ENCODE measurements at regions of chr15 and their contacts with region 1.

Region 1: GRCh38 chr15:33292717-33293307 is 18.0 kb upstream of the RYR3 start:
- DNase-seq: no peak
- H3K4me3 ChIP-seq: no peak overlapping the region
- H3K27ac ChIP-seq: no peak overlapping the region
- H3K4me1 ChIP-seq: no peaks in the 10 kb centered on the region
- H3K27me3 ChIP-seq: peaks cover 0 to 15% (median 0%) of the 10 kb centered on the region in 7 donors
- CTCF ChIP-seq: peak in 9 of 11 experiments; percentile 34 to 62 (median 49)
- POLR2A ChIP-seq: no peak

Region 2: DNA sequence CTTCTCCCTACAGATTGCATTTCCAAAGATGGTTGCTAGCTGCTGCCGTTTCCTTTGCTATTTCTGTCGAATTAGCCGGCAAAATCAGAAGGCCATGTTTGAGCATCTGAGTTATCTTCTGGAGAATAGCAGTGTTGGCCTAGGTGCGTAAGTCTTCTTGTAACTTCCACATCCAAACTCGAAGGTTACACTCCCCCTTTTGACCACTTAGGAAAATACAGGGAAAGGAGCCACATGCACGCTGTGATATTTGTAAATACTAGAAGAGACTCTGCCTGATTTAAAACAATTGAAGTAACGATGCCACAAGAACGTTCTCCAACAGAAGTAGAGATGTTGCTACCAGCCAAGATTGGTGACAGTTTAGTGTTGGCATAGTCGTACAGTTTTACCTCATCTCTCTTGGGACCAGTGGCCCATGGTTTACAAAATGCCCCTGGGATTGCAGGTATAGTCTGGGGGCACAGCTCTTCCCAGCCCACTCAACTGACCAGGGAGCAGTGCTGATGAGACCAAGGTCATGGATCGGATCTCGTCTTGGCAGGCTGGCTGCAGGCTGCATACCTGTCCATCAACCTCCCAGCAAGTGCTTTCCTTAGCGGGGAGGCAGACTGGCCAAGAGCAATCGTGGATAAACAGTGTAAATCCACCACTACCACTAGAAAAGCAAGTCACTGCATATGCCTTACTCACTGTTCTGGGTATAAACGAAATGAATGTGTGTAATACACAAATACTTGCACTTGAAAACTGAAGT is 407.1 kb after region 1 on chr15:
- intact Hi-C with region 1: loop called (anchors 5 kb)
- DNase-seq: no peak
- H3K4me3 ChIP-seq: no peak overlapping the region
- H3K27ac ChIP-seq: no peak overlapping the region
- H3K4me1 ChIP-seq: peaks cover 0 to 5% (median 0%) of the 10 kb centered on the region in 6 donors
- H3K27me3 ChIP-seq: peaks cover 0 to 15% (median 0%) of the 10 kb centered on the region in 7 donors
- CTCF ChIP-seq: no peak
- POLR2A ChIP-seq: no peak

Measured in spleen (tissue), 13 donors.